GM18951 (cell line): ENCODE measurements at regions of chr1 and their contacts with region 1.

Region 1: DNA sequence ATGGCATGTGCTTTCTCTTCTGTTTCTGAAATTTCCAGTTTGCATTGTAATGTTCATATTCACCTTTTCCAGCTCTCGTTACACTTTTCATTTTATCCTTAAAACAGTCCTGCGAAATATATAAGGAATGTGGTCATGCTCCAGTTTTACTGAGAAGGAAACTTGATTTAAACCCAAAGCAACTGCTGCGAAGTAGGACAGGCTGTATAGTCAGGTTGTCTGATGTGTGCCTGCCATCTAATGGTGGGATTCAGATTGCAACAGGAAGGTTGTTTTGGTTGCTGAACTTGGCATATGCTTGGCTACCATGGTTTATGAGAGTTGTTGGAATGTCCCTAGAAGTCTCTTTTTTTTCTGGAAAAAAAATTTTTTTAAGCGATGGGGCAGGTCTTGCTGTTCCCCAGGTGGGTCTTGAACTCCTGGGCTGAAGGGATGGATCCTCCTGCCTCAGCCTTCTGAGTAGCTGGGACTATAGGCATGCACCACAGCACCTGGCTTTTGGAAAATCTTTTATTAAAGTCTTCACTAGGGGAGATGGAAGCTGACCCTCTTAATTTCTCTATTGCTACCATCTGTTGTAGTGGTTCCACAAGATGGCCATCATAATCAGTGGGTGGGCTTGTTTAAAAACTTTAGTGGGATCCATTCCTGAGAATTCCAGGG is 86.9 kb downstream of the UCK2 start:
- POLR2A ChIP-seq: no peak

Region 2: GRCh38 chr1:165717918-165718515 is 196.2 kb before region 1 on chr1:
- in situ Hi-C with region 1: loop called (anchors 5 kb)
- POLR2A ChIP-seq: no peak